Endothelial cell of umbilical vein (primary cell): ENCODE measurements at regions of chr20 and their contacts with region 1.

Region 1: DNA sequence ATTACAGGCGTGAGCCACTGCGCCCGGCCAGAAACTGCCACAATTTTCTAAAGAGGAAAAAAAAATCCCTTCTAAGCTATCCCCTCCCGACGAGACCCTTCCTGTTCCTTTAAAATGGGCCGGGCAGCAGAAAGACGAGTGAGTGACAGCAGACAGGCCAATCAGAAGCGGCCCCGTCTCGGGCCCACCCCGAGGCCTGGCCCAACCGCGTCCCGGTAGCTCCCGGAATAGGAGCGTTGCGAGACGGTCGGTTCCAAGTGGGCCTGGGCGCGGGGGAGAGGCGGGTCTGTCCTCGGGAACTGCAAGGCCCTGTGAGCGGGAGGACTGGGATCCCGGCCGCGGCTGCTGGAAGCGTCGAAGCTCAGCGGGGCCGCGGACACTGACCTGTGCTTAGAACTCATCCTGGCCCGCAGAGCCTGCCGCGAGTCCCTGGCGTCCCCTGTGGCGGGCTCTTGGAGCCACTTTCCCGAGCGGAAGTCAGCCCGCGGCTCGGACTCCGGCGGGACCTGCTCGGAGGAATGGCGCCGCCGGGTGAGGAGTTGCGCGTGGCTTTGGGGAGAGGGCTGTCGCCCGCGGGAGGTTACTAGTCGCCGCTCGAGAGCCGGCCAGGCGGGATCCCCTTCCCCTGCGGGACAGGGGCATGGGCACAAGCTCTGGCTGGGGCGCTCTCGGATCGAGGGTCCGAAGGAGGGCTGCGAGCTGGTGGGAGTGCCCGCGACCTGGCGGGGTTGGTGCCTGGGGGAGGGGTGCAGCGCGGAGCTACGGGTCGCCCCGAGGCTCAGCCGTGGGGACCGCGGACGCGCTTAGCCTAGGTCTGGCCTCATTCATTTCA is at the starts of genes MROH8 and RPN2:
- DNase-seq: peak; percentile 99
- H3K4me3 ChIP-seq: peak within 1 kb of the TSS; percentile 92 to 97 (median 96)
- H3K27ac ChIP-seq: peak within 1 kb of the TSS; percentile 94
- H3K4me1 ChIP-seq: peaks cover 15% of the 10 kb centered on the region
- H3K27me3 ChIP-seq: no peaks in the 10 kb centered on the region
- CTCF ChIP-seq: no peak
- POLR2A ChIP-seq: peak; percentile 57
- total RNA-seq, gene MROH8: 1.5 and 2.7 TPM in 2 replicates
- total RNA-seq, gene RPN2: 243 and 283 TPM in 2 replicates

Region 2: GRCh38 chr20:36951198-36951976 is 227.7 kb before region 1 on chr20 and contains the start of gene SAMHD1:
- CTCF ChIA-PET with region 1: no interaction called
- POLR2A ChIA-PET with region 1: no interaction called
- dilution Hi-C with region 1: no loop called
- intact Hi-C with region 1: loop called (anchors 2 kb)
- DNase-seq: peak; percentile 98
- H3K4me3 ChIP-seq: peak within 1 kb of the TSS; percentile 70 to 81 (median 76)
- H3K27ac ChIP-seq: no peak within 1 kb of the TSS
- H3K4me1 ChIP-seq: peaks cover 10% of the 10 kb centered on the region
- H3K27me3 ChIP-seq: no peaks in the 10 kb centered on the region
- CTCF ChIP-seq: peak in 1 of 2 donors; percentile 15
- POLR2A ChIP-seq: peak; percentile 70
- total RNA-seq, gene SAMHD1: 27.5 and 28.3 TPM in 2 replicates

Region 3: GRCh38 chr20:37095599-37096414 is 83.2 kb before region 1 on chr20 and contains the start of gene RBL1:
- CTCF ChIA-PET with region 1: interaction called, 6 read pairs
- POLR2A ChIA-PET with region 1: no interaction called
- dilution Hi-C with region 1: no loop called
- intact Hi-C with region 1: loop called (anchors 10 kb)
- DNase-seq: peak; percentile 86
- H3K4me3 ChIP-seq: peak within 1 kb of the TSS; percentile 29 to 70 (median 69)
- H3K27ac ChIP-seq: peak within 1 kb of the TSS; percentile 73
- H3K4me1 ChIP-seq: peaks cover 11% of the 10 kb centered on the region
- H3K27me3 ChIP-seq: no peaks in the 10 kb centered on the region
- CTCF ChIP-seq: no peak
- POLR2A ChIP-seq: peak; percentile 58
- total RNA-seq, gene RBL1: 16.8 and 20.1 TPM in 2 replicates